ENCODE measurements at regions of chr5 and their contacts with region 1.

Region 1: GRCh38 chr5:142012792-142013388 is at the start of gene GNPDA1:
- DNase-seq: peak; percentile 74
- ATAC-seq: peak; percentile 53
- H3K4me3 Mint-ChIP-seq: peak within 1 kb of the TSS; percentile 82
- H3K27ac Mint-ChIP-seq: peak within 1 kb of the TSS; percentile 93
- H3K4me1 Mint-ChIP-seq: peaks cover 85% of the 10 kb centered on the region
- H3K27me3 Mint-ChIP-seq: no peaks in the 10 kb centered on the region
- total RNA-seq, gene GNPDA1: 34.9 to 41.0 TPM

Region 2: GRCh38 chr5:141636413-141637122 is 376.3 kb before region 1 on chr5 and contains the starts of genes HDAC3 and RELL2:
- CTCF ChIA-PET with region 1: no interaction called
- POLR2A ChIA-PET with region 1: no interaction called
- DNase-seq: peak; percentile 94
- ATAC-seq: peak; percentile 79
- H3K4me3 Mint-ChIP-seq: peak within 1 kb of the TSS; percentile 93
- H3K27ac Mint-ChIP-seq: peak within 1 kb of the TSS; percentile 90
- H3K4me1 Mint-ChIP-seq: peaks cover 56% of the 10 kb centered on the region
- H3K27me3 Mint-ChIP-seq: no peaks in the 10 kb centered on the region
- total RNA-seq, gene HDAC3: 88.1 to 91.8 TPM
- total RNA-seq, gene RELL2: 36.9 to 37.1 TPM

Region 3: DNA sequence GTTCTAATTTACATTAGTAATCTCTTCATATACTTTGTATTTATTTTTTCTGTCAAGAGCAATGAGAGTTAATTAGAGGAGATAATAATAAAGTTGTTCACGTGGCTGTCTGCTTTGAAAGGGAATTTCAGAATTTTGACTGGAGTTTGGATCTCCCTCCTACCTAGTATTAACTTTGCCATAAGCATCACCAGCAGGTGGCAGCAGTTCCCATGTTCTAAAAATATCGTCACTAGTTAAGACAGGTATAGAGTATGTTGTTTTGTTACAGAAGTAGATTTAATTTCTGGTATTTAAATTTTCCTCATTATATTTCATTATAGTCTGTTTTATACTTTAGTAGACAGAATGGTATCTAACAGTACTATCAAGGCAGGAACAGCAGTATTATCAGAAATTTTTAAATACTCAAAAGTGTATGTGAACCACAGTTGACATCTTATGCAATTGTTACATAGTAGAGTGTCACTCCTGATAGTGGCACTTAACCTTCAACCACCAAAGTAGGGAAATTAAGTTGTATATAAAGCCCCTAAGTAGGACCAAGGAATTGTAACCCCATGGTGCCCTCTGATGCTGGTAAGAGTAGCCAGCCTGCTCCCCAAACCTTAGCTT is 20.4 kb before region 1 on chr5:
- CTCF ChIA-PET with region 1: interaction called, 126 read pairs
- POLR2A ChIA-PET with region 1: interaction called, 3 read pairs
- DNase-seq: peak; percentile 87
- ATAC-seq: peak; percentile 91
- H3K4me3 Mint-ChIP-seq: no peak overlapping the region
- H3K27ac Mint-ChIP-seq: no peak overlapping the region
- H3K4me1 Mint-ChIP-seq: peaks cover 3% of the 10 kb centered on the region
- H3K27me3 Mint-ChIP-seq: no peaks in the 10 kb centered on the region

Region 4: GRCh38 chr5:142024771-142025304 is 11.9 kb after region 1 on chr5:
- CTCF ChIA-PET with region 1: interaction called, 31 read pairs
- POLR2A ChIA-PET with region 1: interaction called, 21 read pairs
- DNase-seq: peak; percentile 90
- ATAC-seq: peak; percentile 100
- H3K4me3 Mint-ChIP-seq: peak overlapping the region; percentile 83
- H3K27ac Mint-ChIP-seq: peak overlapping the region; percentile 99
- H3K4me1 Mint-ChIP-seq: peaks cover 17% of the 10 kb centered on the region
- H3K27me3 Mint-ChIP-seq: peaks cover 3% of the 10 kb centered on the region

Region 5: GRCh38 chr5:142095651-142096330 is 82.9 kb after region 1 on chr5:
- CTCF ChIA-PET with region 1: interaction called, 22 read pairs
- POLR2A ChIA-PET with region 1: interaction called, 9 read pairs
- DNase-seq: peak; percentile 91
- ATAC-seq: peak; percentile 90
- H3K4me3 Mint-ChIP-seq: peak overlapping the region; percentile 51
- H3K27ac Mint-ChIP-seq: peak overlapping the region; percentile 96
- H3K4me1 Mint-ChIP-seq: peaks cover 42% of the 10 kb centered on the region
- H3K27me3 Mint-ChIP-seq: no peaks in the 10 kb centered on the region

Region 6: DNA sequence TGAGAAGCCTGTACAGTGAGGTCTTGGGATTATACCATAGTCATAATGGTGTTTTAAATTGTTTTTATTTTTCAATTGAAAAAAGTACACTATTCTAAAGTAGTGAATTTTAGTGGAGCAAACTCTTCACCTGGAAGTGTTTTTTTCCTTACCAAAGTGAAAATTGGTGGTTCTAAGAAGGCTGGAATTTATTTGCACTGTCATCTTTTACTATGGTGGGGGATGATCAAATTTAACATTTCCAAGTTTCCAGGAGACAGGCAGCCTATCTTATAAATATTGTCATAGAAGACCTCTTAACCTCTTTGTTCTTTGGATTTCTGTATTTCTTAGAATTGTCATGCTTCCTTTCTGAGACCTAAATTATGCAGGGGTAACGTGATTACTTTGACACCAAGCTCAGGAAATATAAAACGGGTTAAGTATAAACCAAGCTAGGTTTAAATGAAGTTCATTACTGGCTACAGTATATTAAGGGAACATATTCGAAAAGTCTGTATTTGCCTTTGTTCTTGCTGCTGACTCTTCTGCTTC is 115.9 kb after region 1 on chr5:
- CTCF ChIA-PET with region 1: interaction called, 16 read pairs
- POLR2A ChIA-PET with region 1: interaction called, 5 read pairs
- DNase-seq: no peak
- ATAC-seq: peak; percentile 77
- H3K4me3 Mint-ChIP-seq: peak overlapping the region; percentile 38
- H3K27ac Mint-ChIP-seq: peak overlapping the region; percentile 4
- H3K4me1 Mint-ChIP-seq: peaks cover 47% of the 10 kb centered on the region
- H3K27me3 Mint-ChIP-seq: no peaks in the 10 kb centered on the region

Region 7: GRCh38 chr5:142644640-142645361 is 631.9 kb after region 1 on chr5:
- CTCF ChIA-PET with region 1: no interaction called
- POLR2A ChIA-PET with region 1: no interaction called
- DNase-seq: no peak
- ATAC-seq: no peak
- H3K4me3 Mint-ChIP-seq: no peak overlapping the region
- H3K27ac Mint-ChIP-seq: no peak overlapping the region
- H3K4me1 Mint-ChIP-seq: peaks cover 6% of the 10 kb centered on the region
- H3K27me3 Mint-ChIP-seq: peaks cover 23% of the 10 kb centered on the region